ENCODE measurements at regions of chr5 and their contacts with region 1.

Region 1: GRCh38 chr5:36241631-36242533 is at the start of gene NADK2:
- DNase-seq: peak; percentile 92
- H3K4me3 ChIP-seq: peak within 1 kb of the TSS; percentile 87 to 89
- H3K27ac ChIP-seq: peak within 1 kb of the TSS; percentile 90 to 92
- H3K4me1 ChIP-seq: peaks cover 21 to 28% of the 10 kb centered on the region in 2 experiments
- H3K27me3 ChIP-seq: no peaks in the 10 kb centered on the region
- CTCF ChIP-seq: peak; percentile 64
- EP300 ChIP-seq: peak in 1 of 2 experiments; percentile 49; a peak in 2 of 4 replicates
- RAD21 ChIP-seq: peak; percentile 35; the same call in 1 of the 2 replicates
- polyA plus RNA-seq, gene NADK2: 7.6 and 9.7 TPM in 2 replicates

Region 2: DNA sequence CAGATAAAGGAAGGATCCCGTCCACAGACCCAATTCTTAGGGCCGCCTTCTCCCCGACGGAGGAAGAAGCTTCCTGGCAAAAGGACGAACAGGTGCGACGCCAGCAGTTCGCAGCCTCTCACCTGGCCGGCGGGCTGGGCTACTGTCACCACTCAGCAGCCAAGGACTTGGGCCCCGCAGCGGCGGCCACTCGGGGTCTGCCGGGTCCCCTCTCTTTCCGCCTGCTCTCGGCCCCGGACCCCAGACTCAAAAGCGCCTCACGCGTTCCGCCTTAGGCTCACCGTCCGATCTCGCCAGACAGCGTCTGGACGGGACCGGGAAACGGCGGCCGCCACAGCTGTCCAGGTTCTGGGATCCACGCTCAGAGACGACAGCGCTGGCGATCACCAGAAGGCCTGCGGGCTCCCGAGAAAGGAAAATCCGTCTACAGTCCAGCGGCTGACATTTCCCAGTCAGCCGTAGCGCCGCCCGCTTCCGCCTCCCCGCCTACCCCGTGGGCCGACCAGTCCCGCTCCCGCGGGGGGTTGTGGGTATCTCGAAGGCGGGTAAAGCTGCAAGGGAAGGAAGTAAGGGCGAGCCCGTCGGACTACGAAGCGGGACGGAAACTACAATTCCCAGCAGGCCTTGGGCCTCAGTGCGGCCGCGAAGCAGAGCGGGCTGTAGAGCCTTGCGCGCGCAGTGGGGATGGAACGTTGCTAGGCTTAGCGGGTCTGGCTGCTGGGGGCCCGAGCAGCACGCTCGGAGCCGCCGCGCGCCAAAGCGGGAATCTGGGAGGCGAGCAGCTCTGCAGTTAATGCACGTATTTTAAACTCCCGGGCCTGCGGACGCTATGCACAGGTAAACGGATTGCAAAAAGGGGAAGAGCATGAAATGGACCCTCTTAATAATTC is 90.2 kb before region 1 on chr5 and contains the starts of genes LMBRD2 and SKP2:
- CTCF ChIA-PET with region 1: interaction called, 7 read pairs
- POLR2A ChIA-PET with region 1: interaction called, 11 read pairs
- DNase-seq: peak; percentile 95
- H3K4me3 ChIP-seq: peak within 1 kb of the TSS; percentile 84 to 99
- H3K27ac ChIP-seq: peak within 1 kb of the TSS; percentile 42 to 89
- H3K4me1 ChIP-seq: peaks cover 30 to 31% of the 10 kb centered on the region in 2 experiments
- H3K27me3 ChIP-seq: no peaks in the 10 kb centered on the region
- CTCF ChIP-seq: no peak
- EP300 ChIP-seq: peak in 1 of 2 experiments; percentile 10; a peak in 1 of 4 replicates
- RAD21 ChIP-seq: peak; percentile 5; the same call in 1 of the 2 replicates
- polyA plus RNA-seq, gene LMBRD2: 1.6 and 2.2 TPM in 2 replicates
- polyA plus RNA-seq, gene SKP2: 12.4 and 14.8 TPM in 2 replicates

Region 3: DNA sequence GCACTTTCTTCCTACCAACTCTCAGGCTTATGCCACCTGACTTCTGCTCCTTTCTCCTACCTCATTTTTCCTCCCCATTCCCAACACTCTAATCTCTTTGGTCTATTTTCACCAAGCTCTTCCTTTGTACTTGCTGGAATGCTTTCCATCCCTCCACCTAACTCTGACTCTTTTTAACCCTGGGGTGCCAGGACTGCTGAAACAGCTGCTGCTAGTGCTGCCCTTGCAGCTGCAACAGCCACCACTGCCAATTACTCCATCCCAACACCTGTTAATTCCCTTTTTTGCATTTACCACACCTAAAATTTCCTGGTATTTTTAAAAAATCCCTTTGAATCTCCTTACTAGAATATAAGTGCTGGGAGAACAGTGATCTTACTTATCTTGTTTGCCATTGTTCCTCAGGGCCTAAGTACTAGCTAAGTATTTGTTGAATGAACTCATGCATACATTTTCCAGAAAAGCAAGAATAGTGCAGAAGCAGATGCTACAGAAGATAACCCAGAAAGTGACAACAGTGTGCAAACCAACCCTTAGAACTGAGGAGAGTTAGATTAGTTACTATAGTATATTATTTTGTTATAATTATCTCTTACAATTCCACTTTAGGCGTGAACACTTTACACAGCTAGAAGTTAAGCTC is 11.6 kb before region 1 on chr5:
- CTCF ChIA-PET with region 1: interaction called, 15 read pairs
- POLR2A ChIA-PET with region 1: interaction called, 3 read pairs
- DNase-seq: no peak
- H3K4me3 ChIP-seq: no peak overlapping the region
- H3K27ac ChIP-seq: no peak overlapping the region
- H3K4me1 ChIP-seq: peaks cover 0 to 7% of the 10 kb centered on the region in 2 experiments; a peak in 3 of 4 replicates
- H3K27me3 ChIP-seq: no peaks in the 10 kb centered on the region
- CTCF ChIP-seq: no peak
- EP300 ChIP-seq: no peak
- RAD21 ChIP-seq: no peak

Region 4: GRCh38 chr5:36305571-36306326 is 63.9 kb after region 1 on chr5:
- CTCF ChIA-PET with region 1: interaction called, 17 read pairs
- POLR2A ChIA-PET with region 1: no interaction called
- DNase-seq: peak; percentile 42
- H3K4me3 ChIP-seq: no peak overlapping the region
- H3K27ac ChIP-seq: no peak overlapping the region
- H3K4me1 ChIP-seq: no peaks in the 10 kb centered on the region; a peak in 2 of 4 replicates
- H3K27me3 ChIP-seq: no peaks in the 10 kb centered on the region; the same call in 1 of the 2 replicates
- CTCF ChIP-seq: peak; percentile 83
- EP300 ChIP-seq: no peak
- RAD21 ChIP-seq: peak; percentile 91

Measured in SK-N-SH (cell line).